Prostate gland (tissue), 2 donors: ENCODE measurements at regions of chr10 and their contacts with region 1.

Region 1: GRCh38 chr10:28676968-28677887 is at the start of gene BAMBI:
- DNase-seq: peak; percentile 93
- H3K4me3 ChIP-seq: peak within 1 kb of the TSS; percentile 57 to 81
- H3K27ac ChIP-seq: peak within 1 kb of the TSS; percentile 33 to 50
- H3K4me1 ChIP-seq: no peaks in the 10 kb centered on the region
- H3K27me3 ChIP-seq: no peaks in the 10 kb centered on the region
- CTCF ChIP-seq: peak; percentile 56 to 90 (median 65)
- POLR2A ChIP-seq: peak; percentile 97
- total RNA-seq, gene BAMBI: 3.1 to 58.9 TPM

Region 2: DNA sequence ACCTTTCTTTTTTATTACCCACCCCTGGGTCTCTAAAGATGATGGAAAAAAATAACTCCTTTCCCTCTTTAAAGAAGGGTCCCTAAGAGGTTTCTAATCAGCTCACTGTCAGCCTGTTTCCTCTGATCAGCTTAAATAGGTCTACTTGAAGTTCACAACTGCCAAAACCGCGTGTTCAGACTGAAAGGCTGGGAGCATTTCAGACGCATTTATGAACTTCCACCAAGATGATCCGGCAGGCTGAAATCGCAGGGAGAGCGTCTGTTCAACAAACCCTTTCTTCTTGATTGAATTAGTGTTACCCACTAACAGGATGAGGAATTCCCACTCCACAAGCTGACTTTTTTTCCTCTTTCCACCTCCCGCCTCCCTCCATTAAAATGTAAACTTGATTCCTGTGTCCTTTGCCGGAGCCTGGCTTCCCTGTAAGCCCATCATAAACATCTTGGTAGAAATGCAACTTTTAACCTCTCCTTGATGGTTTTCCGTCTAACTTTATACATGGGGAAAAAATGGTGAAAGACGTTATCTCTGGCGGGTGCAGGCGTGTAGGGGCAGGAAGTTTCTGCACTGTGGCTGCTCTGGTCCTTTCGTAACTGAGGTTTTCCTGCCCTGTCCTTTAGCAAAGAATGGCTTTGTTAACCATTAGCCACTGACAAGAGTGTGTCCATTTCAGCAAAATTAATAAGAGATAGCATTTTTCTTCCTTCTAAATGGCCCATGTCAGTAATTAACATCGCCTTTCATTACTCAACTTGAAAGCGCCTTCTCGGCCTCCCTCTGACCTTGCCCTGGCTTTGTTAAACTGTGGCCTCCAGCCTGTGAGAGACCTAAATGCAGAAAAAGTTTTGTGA is 130.8 kb after region 1 on chr10:
- intact Hi-C with region 1: loop called (anchors 10 kb)
- DNase-seq: no peak
- H3K4me3 ChIP-seq: no peak overlapping the region
- H3K27ac ChIP-seq: no peak overlapping the region
- H3K4me1 ChIP-seq: no peaks in the 10 kb centered on the region
- H3K27me3 ChIP-seq: no peaks in the 10 kb centered on the region
- CTCF ChIP-seq: no peak
- POLR2A ChIP-seq: no peak

Region 3: DNA sequence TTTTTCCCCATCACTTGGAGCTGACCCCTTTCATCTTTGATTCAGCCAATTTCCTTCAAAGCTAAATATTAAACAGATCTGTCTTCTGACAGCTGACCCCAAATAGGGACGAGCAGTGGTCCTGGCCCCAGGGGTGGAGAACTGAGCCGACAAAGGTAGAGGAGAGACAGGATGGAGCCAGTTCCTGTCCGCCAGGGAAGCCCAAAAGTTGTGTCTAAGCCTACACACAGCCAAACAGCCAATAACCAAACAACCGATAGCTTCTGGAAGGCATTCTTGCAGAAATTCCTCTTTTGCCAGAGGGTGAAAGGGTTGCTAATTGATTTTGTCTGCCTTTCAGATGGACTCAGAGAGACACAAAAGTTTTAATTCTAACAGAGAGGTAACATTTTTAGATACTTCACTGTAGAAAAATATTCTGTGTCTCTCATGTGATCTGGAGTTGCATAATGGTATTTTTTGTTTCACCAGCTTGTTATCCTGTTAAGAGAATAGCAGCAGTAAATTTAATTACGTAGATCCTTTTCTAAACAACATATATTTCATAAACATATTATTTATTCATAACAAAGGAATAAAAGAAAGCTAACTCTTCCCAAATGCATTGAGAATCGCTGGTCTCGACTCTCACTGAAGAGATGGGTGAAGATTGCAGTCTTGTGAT is 449.9 kb after region 1 on chr10:
- intact Hi-C with region 1: loop called (anchors 5 kb)
- DNase-seq: no peak
- H3K4me3 ChIP-seq: no peak overlapping the region
- H3K27ac ChIP-seq: no peak overlapping the region
- H3K4me1 ChIP-seq: no peaks in the 10 kb centered on the region
- H3K27me3 ChIP-seq: no peaks in the 10 kb centered on the region
- CTCF ChIP-seq: no peak
- POLR2A ChIP-seq: no peak